Activated T-helper 2 cell treated with anti-CD3 and anti-CD28 coated beads, Interferon-gamma antibody, Interleukin-2, Interleukin-4, amounts not matched to agents 10 μg/mL and 5 μg/mL and 100 μg/mL, durations not matched to agents 14 hours and 24 hours and 36 hours (primary cell): ENCODE measurements at regions of chr19 and their contacts with region 1.

Region 1: DNA sequence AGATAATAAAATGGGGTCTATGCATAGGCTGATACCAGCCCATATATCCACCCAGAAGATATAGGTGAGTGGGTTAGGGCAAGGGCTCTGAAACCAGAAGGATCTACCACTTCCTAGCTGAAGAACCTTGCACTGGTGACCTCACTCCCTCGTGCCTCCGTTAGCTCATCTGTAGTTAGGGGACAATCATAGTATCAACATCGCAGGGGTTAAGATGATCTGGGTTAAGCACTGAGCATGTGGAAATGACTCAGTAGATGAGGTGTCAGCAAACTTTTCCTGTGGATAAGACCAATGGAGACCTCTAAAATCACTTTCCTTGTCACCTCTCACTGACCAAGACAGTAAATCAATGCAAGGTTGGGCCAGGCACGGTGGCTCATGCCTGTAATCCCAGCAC is 30.5 kb downstream of the TNFSF14 start:
- DNase-seq: no peak
- H3K4me3 Mint-ChIP-seq: no peak overlapping the region
- H3K27ac Mint-ChIP-seq: peak overlapping the region; percentile 45
- H3K4me1 Mint-ChIP-seq: peaks cover 37% of the 10 kb centered on the region
- H3K27me3 Mint-ChIP-seq: no peaks in the 10 kb centered on the region

Region 2: DNA sequence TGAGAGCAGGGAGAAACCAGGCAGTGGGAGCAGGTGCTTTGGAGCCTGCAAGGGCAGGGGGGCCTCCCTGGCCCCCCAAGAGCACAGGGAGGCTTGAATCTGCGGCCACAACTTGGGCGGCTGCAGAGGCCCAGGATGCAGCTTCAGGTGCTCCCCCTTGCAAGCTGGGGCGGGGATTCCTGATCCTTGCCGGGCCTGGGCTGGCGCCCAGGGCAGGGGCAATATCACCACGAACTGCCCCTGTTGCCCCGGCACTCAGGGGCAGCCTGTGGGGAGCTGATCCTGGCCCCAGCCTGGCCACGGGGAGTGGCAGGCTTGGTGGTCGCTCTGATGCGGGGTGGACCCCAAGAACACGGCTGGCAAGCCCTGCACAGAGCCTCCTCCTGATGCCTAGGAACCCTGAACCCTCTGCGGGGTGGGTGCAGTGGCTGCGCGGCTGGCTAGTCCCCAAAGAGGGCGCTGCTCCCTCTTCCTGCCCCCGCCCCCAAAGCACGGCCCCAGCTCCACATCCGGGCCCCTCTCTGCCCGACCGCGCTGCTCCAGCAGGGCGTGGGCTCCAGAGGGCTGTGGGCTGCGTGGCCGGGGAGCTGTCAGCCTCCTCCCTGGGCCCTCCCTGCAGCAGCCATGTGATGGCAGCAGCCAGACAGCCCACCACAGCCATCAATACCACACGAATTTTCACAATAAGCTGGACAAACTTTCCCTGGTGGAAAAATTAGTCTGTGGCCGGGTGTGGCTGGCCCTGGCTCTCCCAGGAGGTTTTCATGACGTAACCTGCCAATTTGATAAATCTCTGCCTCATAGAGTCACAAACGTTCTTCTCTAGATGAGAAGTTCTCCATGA is 87.6 kb before region 1 on chr19:
- intact Hi-C with region 1: no loop called
- DNase-seq: peak; percentile 55
- H3K4me3 Mint-ChIP-seq: no peak overlapping the region
- H3K27ac Mint-ChIP-seq: no peak overlapping the region
- H3K4me1 Mint-ChIP-seq: peaks cover 10% of the 10 kb centered on the region
- H3K27me3 Mint-ChIP-seq: peaks cover 4% of the 10 kb centered on the region

Region 3: GRCh38 chr19:6654347-6655310 is 15.2 kb after region 1 on chr19:
- intact Hi-C with region 1: loop called (anchors 1 kb)
- DNase-seq: peak; percentile 52
- H3K4me3 Mint-ChIP-seq: peak overlapping the region; percentile 76
- H3K27ac Mint-ChIP-seq: peak overlapping the region; percentile 99
- H3K4me1 Mint-ChIP-seq: peaks cover 63% of the 10 kb centered on the region
- H3K27me3 Mint-ChIP-seq: no peaks in the 10 kb centered on the region